Sigmoid colon (tissue), 7 donors: ENCODE measurements at regions of chr20 and their contacts with region 1.

Region 1: GRCh38 chr20:19995220-19995863 is 21.8 kb upstream of the NAA20 start:
- DNase-seq: no peak
- H3K4me3 ChIP-seq: no peak overlapping the region
- H3K27ac ChIP-seq: peak overlapping the region in 3 of 4 donors; percentile 76 to 87 (median 83)
- H3K4me1 ChIP-seq: peaks cover 0 to 71% (median 47%) of the 10 kb centered on the region in 4 donors
- H3K27me3 ChIP-seq: no peaks in the 10 kb centered on the region
- CTCF ChIP-seq: peak; percentile 49 to 83 (median 72)
- EP300 ChIP-seq: no peak
- POLR2A ChIP-seq: no peak

Region 2: GRCh38 chr20:19692685-19693119 is 302.6 kb before region 1 on chr20:
- intact Hi-C with region 1: loop called (anchors 2 kb)
- DNase-seq: peak; percentile 70
- H3K4me3 ChIP-seq: no peak overlapping the region
- H3K27ac ChIP-seq: no peak overlapping the region
- H3K4me1 ChIP-seq: peaks cover 0 to 6% (median 0%) of the 10 kb centered on the region in 4 donors
- H3K27me3 ChIP-seq: no peaks in the 10 kb centered on the region
- CTCF ChIP-seq: peak; percentile 77 to 91 (median 89)
- EP300 ChIP-seq: no peak
- POLR2A ChIP-seq: no peak

Region 3: DNA sequence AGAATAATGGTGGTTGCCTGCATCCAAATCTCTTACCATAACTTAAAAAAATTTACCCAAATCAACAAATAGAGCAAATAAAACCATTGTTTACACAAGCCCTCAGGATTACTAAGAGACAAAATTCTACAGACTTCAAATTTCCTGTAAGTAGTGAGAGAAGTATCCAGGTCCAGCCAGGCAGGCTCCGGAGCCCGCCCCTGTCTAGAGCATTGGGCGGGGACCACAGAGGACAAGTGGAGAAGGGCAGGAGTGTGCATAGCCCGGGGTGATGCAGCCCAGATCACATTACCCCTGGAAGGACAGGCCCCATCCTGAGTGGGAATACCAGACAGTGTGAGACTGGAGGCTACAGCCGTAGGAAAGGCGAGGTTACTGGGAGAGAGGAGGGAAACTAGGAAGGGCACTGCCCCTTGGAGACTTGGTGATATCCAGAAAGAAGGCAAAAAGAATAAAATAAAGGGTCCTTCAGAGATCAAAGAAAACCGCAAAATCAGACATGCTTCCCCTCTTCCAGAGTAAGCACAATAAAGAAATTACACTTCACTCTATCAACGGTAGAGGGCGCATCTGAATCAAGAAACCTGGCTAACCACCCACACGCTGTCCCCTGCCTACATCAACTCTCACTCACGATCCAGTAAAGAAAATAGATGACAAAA is 210.7 kb before region 1 on chr20:
- intact Hi-C with region 1: loop called (anchors 1 kb)
- DNase-seq: peak; percentile 78
- H3K4me3 ChIP-seq: no peak overlapping the region
- H3K27ac ChIP-seq: peak overlapping the region; percentile 21 to 64 (median 54)
- H3K4me1 ChIP-seq: peaks cover 0 to 33% (median 30%) of the 10 kb centered on the region in 4 donors
- H3K27me3 ChIP-seq: no peaks in the 10 kb centered on the region
- CTCF ChIP-seq: peak; percentile 67 to 84 (median 80)
- EP300 ChIP-seq: no peak
- POLR2A ChIP-seq: no peak

Region 4: GRCh38 chr20:19889011-19889953 is 106.1 kb before region 1 on chr20:
- intact Hi-C with region 1: loop called (anchors 5 kb)
- DNase-seq: peak; percentile 77
- H3K4me3 ChIP-seq: peak overlapping the region in 3 of 4 donors; percentile 33 to 43 (median 35)
- H3K27ac ChIP-seq: peak overlapping the region; percentile 80 to 87 (median 85)
- H3K4me1 ChIP-seq: peaks cover 0 to 64% (median 53%) of the 10 kb centered on the region in 4 donors
- H3K27me3 ChIP-seq: no peaks in the 10 kb centered on the region
- CTCF ChIP-seq: no peak
- EP300 ChIP-seq: no peak
- POLR2A ChIP-seq: no peak

Region 5: DNA sequence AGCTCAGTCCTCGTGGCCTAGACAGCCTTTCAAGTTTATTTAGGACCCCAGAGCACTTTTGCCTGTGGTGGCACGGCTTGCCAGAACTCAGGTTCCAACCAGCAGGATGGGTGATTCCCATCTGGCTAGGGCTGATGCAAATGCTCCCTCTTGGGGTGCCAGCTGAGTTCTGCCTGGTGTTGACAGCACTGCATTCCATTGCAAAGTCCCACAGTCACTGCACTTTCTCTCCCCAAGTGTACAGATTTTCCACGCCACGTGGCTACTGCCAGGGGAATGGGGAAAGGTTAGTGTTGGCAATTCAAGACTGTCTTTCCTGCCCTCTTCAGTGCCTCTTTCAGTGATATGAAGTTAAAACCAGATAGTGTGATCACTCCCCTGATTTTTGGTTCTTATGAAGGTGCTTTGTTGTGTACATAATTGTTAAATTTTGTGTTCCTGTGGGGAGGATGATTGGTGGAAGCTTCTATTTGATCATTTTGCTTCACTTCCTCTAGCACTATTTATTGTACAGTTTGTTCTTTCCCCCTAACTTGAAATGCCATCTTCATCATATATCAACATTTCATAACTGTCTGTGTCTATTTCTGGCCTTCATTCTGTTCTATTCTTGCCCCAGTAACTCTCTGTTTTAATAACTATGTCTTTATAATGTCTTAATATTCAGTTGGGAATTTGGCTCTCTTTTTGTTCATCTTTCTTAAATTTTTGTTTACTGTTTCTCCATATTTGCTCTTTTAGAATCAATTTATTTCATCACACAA is 143.1 kb after region 1 on chr20:
- intact Hi-C with region 1: no loop called
- DNase-seq: no peak
- H3K4me3 ChIP-seq: no peak overlapping the region
- H3K27ac ChIP-seq: no peak overlapping the region
- H3K4me1 ChIP-seq: no peaks in the 10 kb centered on the region
- H3K27me3 ChIP-seq: no peaks in the 10 kb centered on the region
- CTCF ChIP-seq: no peak
- EP300 ChIP-seq: no peak
- POLR2A ChIP-seq: no peak

Region 6: DNA sequence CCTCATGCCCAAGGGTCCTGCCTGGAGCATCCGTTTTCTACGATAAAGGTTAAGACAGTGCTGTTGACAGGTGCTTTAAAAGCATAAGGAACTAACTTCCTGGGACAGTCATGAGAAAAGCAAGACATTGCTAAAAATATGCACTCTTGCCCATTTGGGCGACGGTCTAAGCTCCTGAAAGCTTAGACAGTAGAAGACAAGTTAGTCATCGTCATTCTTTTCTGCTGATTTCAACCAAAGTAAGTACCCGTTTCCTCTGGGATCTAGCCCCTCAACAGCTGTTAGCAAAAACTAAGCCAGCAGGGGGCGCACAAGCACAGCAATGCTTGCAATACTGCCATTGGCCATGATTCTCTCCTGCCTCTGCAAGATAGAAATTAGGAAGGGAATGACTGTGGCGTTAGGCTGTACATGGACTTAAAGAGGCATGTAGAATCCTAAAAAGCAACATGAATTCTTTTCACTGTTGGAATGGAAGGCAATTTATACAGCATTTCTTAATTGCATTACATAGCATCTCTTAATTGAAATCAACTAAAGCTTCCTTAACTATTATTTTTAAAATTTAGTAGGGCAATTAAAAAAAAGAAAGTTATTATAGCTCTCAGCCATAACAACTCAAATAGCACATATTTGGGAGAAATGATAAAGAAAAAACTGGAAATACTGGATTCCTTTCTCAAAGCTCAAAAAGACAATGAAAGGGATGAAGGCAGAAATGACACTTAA is 864.9 kb after region 1 on chr20:
- intact Hi-C with region 1: no loop called
- DNase-seq: peak; percentile 88
- H3K4me3 ChIP-seq: no peak overlapping the region
- H3K27ac ChIP-seq: no peak overlapping the region
- H3K4me1 ChIP-seq: no peaks in the 10 kb centered on the region
- H3K27me3 ChIP-seq: peaks cover 0 to 22% (median 4%) of the 10 kb centered on the region in 3 donors
- CTCF ChIP-seq: peak; percentile 77 to 92 (median 86)
- EP300 ChIP-seq: no peak
- POLR2A ChIP-seq: no peak